Transverse colon (tissue), 4 donors: ENCODE measurements at regions of chr4 and their contacts with region 1.

Region 1: DNA sequence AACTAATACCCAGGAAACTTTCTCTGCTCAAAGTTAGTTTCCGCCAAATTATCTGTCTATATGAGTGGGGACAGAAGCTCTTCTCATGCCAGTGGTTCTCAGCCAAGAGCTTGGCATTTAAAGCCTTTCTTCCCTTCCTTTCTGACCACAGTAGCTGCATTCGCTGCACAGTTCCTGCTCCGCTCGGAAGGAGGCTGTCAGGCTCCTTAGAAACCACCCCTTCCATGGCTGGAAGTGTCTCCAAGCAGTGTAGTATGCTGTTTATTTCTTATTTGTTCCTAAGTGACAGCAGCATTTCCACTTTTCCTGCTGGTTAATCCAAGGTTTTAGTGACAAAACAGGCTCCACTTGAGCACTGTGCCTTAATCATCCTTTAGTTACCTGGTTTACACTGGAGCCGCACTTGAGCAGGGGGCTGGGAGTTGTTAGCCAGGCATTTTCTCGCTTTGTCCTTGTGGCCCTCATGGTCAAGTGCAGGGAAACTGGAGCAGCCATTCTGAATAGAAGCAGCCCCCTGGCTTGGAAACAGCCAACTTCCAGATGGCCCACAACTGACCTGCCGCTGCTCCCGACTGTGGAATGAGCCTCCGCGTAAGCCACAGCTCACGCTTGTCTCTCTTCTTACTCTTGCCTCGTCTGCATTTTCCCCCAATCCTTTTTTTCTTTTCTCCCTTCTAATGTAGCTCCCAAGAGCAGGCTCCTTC is 739.4 kb upstream of the TENM3 start:
- DNase-seq: no peak
- H3K4me3 ChIP-seq: no peak overlapping the region
- H3K27ac ChIP-seq: no peak overlapping the region
- H3K4me1 ChIP-seq: no peaks in the 10 kb centered on the region
- H3K27me3 ChIP-seq: peaks cover 18% of the 10 kb centered on the region
- CTCF ChIP-seq: no peak
- EP300 ChIP-seq: no peak
- POLR2A ChIP-seq: no peak

Region 2: GRCh38 chr4:181301735-181302710 is 201.8 kb before region 1 on chr4:
- in situ Hi-C with region 1: loop called in 1 of 4 experiments (anchors 25 kb)
- intact Hi-C with region 1: no loop called
- DNase-seq: peak; percentile 57
- H3K4me3 ChIP-seq: no peak overlapping the region
- H3K27ac ChIP-seq: no peak overlapping the region
- H3K4me1 ChIP-seq: no peaks in the 10 kb centered on the region
- H3K27me3 ChIP-seq: no peaks in the 10 kb centered on the region
- CTCF ChIP-seq: peak; percentile 33 to 57 (median 50)
- EP300 ChIP-seq: no peak
- POLR2A ChIP-seq: no peak

Region 3: DNA sequence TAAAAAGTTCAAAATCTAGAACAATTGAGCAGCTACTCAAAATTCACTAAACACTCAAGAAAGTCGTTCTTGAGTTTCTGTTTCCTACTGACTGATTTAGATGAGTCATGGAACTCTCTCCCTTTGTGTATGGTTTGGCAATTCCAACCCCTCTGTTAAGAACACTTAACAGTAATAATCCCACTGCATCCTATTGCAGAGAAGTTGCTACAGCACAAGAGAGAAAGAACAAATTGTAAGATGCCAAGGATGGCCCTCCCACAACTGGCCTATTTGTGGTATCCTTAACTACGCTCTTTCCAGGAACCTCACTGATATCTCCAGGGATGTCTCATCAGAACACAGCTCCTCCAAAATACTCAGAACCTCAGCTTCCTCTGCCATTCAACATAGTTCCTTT is 37.6 kb after region 1 on chr4:
- in situ Hi-C with region 1: no loop called
- intact Hi-C with region 1: no loop called
- DNase-seq: no peak
- H3K4me3 ChIP-seq: no peak overlapping the region
- H3K27ac ChIP-seq: no peak overlapping the region
- H3K4me1 ChIP-seq: peaks cover 0 to 25% (median 11%) of the 10 kb centered on the region in 4 donors
- H3K27me3 ChIP-seq: no peaks in the 10 kb centered on the region
- CTCF ChIP-seq: no peak
- EP300 ChIP-seq: no peak
- POLR2A ChIP-seq: no peak

Region 4: GRCh38 chr4:181597766-181598165 is 93.9 kb after region 1 on chr4:
- in situ Hi-C with region 1: no loop called
- intact Hi-C with region 1: no loop called
- DNase-seq: no peak
- H3K4me3 ChIP-seq: no peak overlapping the region
- H3K27ac ChIP-seq: no peak overlapping the region
- H3K4me1 ChIP-seq: no peaks in the 10 kb centered on the region
- H3K27me3 ChIP-seq: no peaks in the 10 kb centered on the region
- CTCF ChIP-seq: no peak
- EP300 ChIP-seq: no peak
- POLR2A ChIP-seq: no peak